ENCODE measurements at regions of chr2 and their contacts with region 1.

Region 1: DNA sequence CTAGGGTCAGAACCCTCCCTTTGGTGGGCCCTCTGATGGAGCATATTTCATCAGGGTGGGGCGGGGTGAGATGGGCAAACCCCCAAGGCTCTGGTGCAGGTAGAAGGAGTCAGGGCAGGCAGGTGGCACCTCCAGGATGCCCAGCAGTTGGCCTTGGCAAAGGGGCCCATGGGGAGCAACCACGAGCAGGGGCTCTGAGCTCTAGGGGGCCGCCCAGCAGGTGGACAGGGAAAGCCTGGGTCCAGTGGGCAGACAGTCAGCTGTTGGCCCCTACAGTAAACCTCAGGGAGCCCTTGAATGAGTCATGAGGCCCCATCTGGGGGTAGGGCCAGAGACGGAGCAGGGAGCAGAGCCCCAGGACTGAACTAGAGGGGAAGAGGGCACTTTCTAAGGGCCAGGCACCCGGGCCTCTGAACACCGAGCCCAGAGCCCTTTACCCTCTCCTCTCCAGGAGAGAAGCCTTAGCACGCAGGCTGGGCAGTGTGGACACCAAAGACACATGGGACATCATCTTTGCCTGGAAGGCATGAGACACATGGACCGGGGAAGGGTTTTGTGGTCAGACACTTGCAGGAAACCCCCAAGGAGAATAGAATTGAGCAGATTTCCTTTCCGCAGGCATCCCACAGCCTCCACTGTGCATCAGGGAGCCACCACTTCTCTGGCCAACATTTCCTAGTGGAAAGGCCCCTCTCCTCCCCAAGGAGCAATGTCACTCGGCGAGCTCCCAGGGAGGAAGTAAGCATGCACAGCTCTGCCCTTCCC is 257.3 kb downstream of the GLI2 start:
- DNase-seq: no peak
- ATAC-seq: no peak
- H3K4me3 ChIP-seq: no peak overlapping the region
- H3K27ac ChIP-seq: no peak overlapping the region
- H3K4me1 ChIP-seq: no peaks in the 10 kb centered on the region
- H3K27me3 ChIP-seq: no peaks in the 10 kb centered on the region
- CTCF ChIP-seq: no peak

Region 2: GRCh38 chr2:120703330-120703994 is 289.5 kb before region 1 on chr2:
- CTCF ChIA-PET with region 1: no interaction called
- POLR2A ChIA-PET with region 1: interaction called, 13 read pairs
- in situ Hi-C with region 1: no loop called
- intact Hi-C with region 1: no loop called
- DNase-seq: peak; percentile 83
- ATAC-seq: peak; percentile 95
- H3K4me3 ChIP-seq: no peak overlapping the region
- H3K27ac ChIP-seq: no peak overlapping the region
- H3K4me1 ChIP-seq: peaks cover 8% of the 10 kb centered on the region
- H3K27me3 ChIP-seq: no peaks in the 10 kb centered on the region
- CTCF ChIP-seq: no peak

Measured in Panc1 (cell line).